CD4-positive, alpha-beta T cell (primary cell): ENCODE measurements at regions of chr1 and their contacts with region 1.

Region 1: DNA sequence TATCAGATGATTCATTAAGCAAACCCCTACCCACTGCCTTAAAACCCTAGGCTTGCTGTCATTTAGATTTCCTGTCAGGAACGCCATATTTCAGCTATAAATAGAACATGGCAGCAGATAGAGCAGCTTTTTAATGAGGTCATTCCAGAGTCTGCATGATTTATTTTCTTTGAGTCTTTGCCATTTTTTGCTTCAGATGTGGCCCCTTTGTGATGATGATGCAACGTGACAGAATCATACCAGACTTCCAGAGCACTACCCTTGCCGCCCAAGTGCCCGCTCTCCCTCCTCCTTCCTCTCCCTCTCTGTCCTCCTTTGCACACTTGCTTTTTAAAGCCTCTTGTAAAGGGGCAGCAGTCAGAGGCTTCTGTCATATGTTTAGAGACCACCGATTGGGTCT is 55.5 kb upstream of the TRIM67 start:
- DNase-seq: no peak
- ATAC-seq: no peak
- H3K4me3 ChIP-seq: no peak overlapping the region
- H3K4me3 Mint-ChIP-seq: no peak overlapping the region
- H3K27ac ChIP-seq: no peak overlapping the region
- H3K27ac Mint-ChIP-seq: no peak overlapping the region
- H3K4me1 ChIP-seq: no peaks in the 10 kb centered on the region
- H3K4me1 Mint-ChIP-seq: peaks cover 17% of the 10 kb centered on the region
- H3K27me3 ChIP-seq: peaks cover 0 to 6% of the 10 kb centered on the region in 2 experiments
- H3K27me3 Mint-ChIP-seq: peaks cover 22% of the 10 kb centered on the region
- CTCF ChIP-seq: no peak

Region 2: GRCh38 chr1:230807029-230807428 is 299.3 kb before region 1 on chr1:
- CTCF ChIA-PET with region 1: no interaction called
- POLR2A ChIA-PET with region 1: no interaction called
- intact Hi-C with region 1: loop called in 1 of 2 experiments (anchors 10 kb)
- DNase-seq: no peak
- ATAC-seq: no peak
- H3K4me3 ChIP-seq: no peak overlapping the region
- H3K4me3 Mint-ChIP-seq: no peak overlapping the region
- H3K27ac ChIP-seq: no peak overlapping the region
- H3K27ac Mint-ChIP-seq: no peak overlapping the region
- H3K4me1 ChIP-seq: no peaks in the 10 kb centered on the region
- H3K4me1 Mint-ChIP-seq: no peaks in the 10 kb centered on the region
- H3K27me3 ChIP-seq: no peaks in the 10 kb centered on the region
- H3K27me3 Mint-ChIP-seq: peaks cover 11% of the 10 kb centered on the region
- CTCF ChIP-seq: no peak

Region 3: GRCh38 chr1:230986976-230987375 is 119.4 kb before region 1 on chr1:
- CTCF ChIA-PET with region 1: no interaction called
- POLR2A ChIA-PET with region 1: no interaction called
- intact Hi-C with region 1: no loop called
- DNase-seq: no peak
- ATAC-seq: no peak
- H3K4me3 ChIP-seq: no peak overlapping the region
- H3K4me3 Mint-ChIP-seq: no peak overlapping the region
- H3K27ac ChIP-seq: no peak overlapping the region
- H3K27ac Mint-ChIP-seq: no peak overlapping the region
- H3K4me1 ChIP-seq: no peaks in the 10 kb centered on the region
- H3K4me1 Mint-ChIP-seq: peaks cover 16% of the 10 kb centered on the region
- H3K27me3 ChIP-seq: no peaks in the 10 kb centered on the region
- H3K27me3 Mint-ChIP-seq: no peaks in the 10 kb centered on the region
- CTCF ChIP-seq: no peak

Region 4: GRCh38 chr1:231091415-231091814 is 14.9 kb before region 1 on chr1:
- CTCF ChIA-PET with region 1: no interaction called
- POLR2A ChIA-PET with region 1: no interaction called
- intact Hi-C with region 1: no loop called
- DNase-seq: no peak
- ATAC-seq: no peak
- H3K4me3 ChIP-seq: no peak overlapping the region
- H3K4me3 Mint-ChIP-seq: no peak overlapping the region
- H3K27ac ChIP-seq: no peak overlapping the region
- H3K27ac Mint-ChIP-seq: no peak overlapping the region
- H3K4me1 ChIP-seq: no peaks in the 10 kb centered on the region
- H3K4me1 Mint-ChIP-seq: no peaks in the 10 kb centered on the region
- H3K27me3 ChIP-seq: peaks cover 7 to 8% of the 10 kb centered on the region in 2 experiments
- H3K27me3 Mint-ChIP-seq: peaks cover 41% of the 10 kb centered on the region
- CTCF ChIP-seq: no peak